Psoas muscle (tissue), 8 donors: ENCODE measurements at regions of chr6 and their contacts with region 1.

Region 1: GRCh38 chr6:32127717-32128592 is at the start of gene ATF6B:
- DNase-seq: peak; percentile 99
- ATAC-seq: peak; percentile 92 to 96 (median 96)
- H3K4me3 ChIP-seq: peak within 1 kb of the TSS; percentile 95
- H3K27ac ChIP-seq: peak within 1 kb of the TSS; percentile 89
- H3K4me1 ChIP-seq: peaks cover 26% of the 10 kb centered on the region
- H3K27me3 ChIP-seq: no peaks in the 10 kb centered on the region
- CTCF ChIP-seq: no peak
- total RNA-seq, gene ATF6B: 17.2 to 23.8 (median 19.9) TPM

Region 2: DNA sequence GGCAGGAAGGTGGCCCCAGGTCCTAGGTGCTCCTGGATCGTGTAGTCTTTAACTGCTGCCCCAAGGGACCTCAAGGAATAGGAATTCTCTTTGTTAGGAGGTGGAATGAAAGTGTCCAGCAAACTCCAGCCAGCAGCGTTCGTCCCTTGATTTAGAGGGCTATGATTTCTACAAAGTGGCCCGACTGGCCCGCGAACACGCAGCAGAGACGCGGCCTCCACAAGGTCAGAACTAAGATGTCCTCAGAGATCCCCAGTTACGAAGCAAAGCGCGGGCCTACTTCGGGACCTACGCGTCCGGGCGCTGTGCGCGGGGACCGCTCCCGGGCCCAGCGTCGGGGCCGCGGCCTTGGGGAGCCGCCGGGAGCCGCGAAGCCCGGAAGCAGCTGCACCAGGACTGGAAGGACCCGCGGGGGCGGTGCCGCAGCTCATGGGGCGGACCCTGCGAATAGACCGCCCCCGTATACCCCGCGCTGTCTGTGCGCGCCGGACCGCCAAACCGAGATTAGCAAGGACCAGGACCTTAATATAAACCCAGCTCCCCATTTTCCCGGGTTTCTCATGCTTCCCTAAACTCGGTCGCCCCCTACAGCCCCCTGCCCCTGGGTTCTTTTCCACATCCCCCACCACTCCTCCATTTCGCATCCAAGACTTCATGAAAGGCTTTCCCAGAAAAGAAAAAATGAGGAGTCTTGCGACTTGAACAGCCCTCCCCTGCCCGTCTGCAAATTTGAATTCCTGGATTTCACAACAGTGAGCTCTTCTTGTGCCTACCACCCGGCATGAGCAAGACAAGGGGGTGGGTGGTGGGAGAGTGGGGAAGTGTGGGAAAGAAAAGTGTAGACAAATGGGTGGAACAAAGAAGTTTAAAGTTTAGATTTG is 467.3 kb before region 1 on chr6 and contains the start of gene C6orf47:
- intact Hi-C with region 1: no loop called
- DNase-seq: peak; percentile 91
- ATAC-seq: peak; percentile 78 to 81 (median 79)
- H3K4me3 ChIP-seq: peak within 1 kb of the TSS; percentile 79
- H3K27ac ChIP-seq: peak within 1 kb of the TSS; percentile 94
- H3K4me1 ChIP-seq: peaks cover 51% of the 10 kb centered on the region
- H3K27me3 ChIP-seq: no peaks in the 10 kb centered on the region
- CTCF ChIP-seq: no peak
- total RNA-seq, gene C6orf47: 13.5 to 21.2 (median 16.1) TPM

Region 3: GRCh38 chr6:32177788-32178546 is 50.0 kb after region 1 on chr6 and contains the start of gene RNF5:
- intact Hi-C with region 1: loop called (anchors 2 to 5 kb)
- DNase-seq: peak; percentile 93 to 94
- ATAC-seq: peak; percentile 86 to 88 (median 87)
- H3K4me3 ChIP-seq: peak within 1 kb of the TSS; percentile 92
- H3K27ac ChIP-seq: peak within 1 kb of the TSS; percentile 87
- H3K4me1 ChIP-seq: peaks cover 38% of the 10 kb centered on the region
- H3K27me3 ChIP-seq: no peaks in the 10 kb centered on the region
- CTCF ChIP-seq: no peak
- total RNA-seq, gene RNF5: 52.0 to 91.1 (median 57.0) TPM